ENCODE measurements at regions of chr11 and their contacts with region 1.

Region 1: GRCh38 chr11:87840786-87841185 is 334.5 kb downstream of the RAB38 start:
- DNase-seq: no peak
- ATAC-seq: no peak
- H3K4me3 ChIP-seq: no peak overlapping the region
- H3K27ac ChIP-seq: no peak overlapping the region
- H3K4me1 ChIP-seq: no peaks in the 10 kb centered on the region
- H3K27me3 ChIP-seq: no peaks in the 10 kb centered on the region
- CTCF ChIP-seq: no peak

Region 2: DNA sequence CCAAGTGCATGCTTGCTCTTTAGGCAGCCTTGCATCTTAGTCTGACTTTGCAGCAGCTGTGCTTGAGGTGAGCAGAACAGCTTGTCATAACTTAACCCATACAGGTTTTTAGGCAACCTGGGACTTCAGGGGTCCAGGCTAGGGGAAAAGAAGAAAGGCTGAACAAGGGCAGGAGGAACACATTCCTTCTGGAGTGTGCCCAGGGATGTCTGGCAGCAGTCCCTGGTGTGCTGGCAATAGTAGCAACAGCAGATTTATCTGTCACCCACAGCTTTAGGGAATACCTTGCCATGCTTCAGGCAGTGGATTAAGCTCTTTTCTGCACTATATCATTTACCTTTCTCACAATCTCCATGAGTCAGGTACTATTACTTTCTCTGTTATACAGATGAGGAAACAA is 178.5 kb before region 1 on chr11:
- intact Hi-C with region 1: no loop called
- DNase-seq: no peak
- ATAC-seq: no peak
- H3K4me3 ChIP-seq: no peak overlapping the region
- H3K27ac ChIP-seq: no peak overlapping the region
- H3K4me1 ChIP-seq: no peaks in the 10 kb centered on the region
- H3K27me3 ChIP-seq: no peaks in the 10 kb centered on the region
- CTCF ChIP-seq: no peak

Region 3: DNA sequence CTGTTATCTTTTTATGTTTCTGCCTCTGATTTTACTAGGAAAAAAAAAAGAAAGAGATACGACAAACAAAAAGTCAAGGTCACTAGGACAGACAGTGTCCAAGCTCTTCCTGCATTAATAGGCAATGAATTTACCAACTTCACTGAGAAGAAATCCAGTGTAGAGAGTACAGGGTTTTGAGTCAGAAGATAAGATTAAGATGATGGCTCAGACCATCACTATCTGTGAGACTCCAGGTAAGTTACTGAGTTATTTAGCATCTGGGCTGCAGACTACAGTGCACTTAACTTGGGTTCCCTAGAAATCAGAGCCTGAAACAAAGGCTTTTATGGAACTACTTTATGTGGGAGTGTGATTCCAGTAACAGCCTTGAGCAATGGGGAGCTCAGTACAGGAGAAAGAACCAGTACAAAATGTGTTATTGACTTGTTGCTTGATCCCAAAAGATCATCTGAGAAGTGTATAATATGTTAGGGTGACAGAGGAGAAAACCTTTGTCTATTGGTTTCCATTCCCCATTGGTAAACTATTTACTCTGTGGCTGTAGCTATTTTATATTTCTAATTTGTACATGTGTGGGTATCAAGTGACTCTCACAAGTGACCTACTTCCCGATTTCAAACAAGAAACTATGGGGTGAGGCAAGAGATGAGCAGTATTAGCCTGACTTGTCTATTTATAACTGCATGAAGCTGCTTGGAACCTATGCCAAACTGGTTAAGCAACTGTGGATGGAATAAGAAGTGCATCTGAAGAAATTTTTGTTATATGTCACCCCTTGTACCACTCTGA is 61.3 kb before region 1 on chr11:
- intact Hi-C with region 1: loop called in 1 of 2 experiments (anchors 10 kb)
- DNase-seq: no peak
- ATAC-seq: peak; percentile 95 to 98 (median 97)
- H3K4me3 ChIP-seq: no peak overlapping the region
- H3K27ac ChIP-seq: peak overlapping the region; percentile 76
- H3K4me1 ChIP-seq: peaks cover 16% of the 10 kb centered on the region
- H3K27me3 ChIP-seq: no peaks in the 10 kb centered on the region
- CTCF ChIP-seq: no peak